B cell (primary cell): ENCODE measurements at regions of chr17 and their contacts with region 1.

Region 1: GRCh38 chr17:49556223-49556971 is 19.3 kb upstream of the NXPH3 start:
- DNase-seq: peak; percentile 85
- ATAC-seq: peak; percentile 94
- H3K4me3 ChIP-seq: no peak overlapping the region
- H3K4me3 Mint-ChIP-seq: no peak overlapping the region
- H3K27ac ChIP-seq: no peak overlapping the region
- H3K27ac Mint-ChIP-seq: no peak overlapping the region
- H3K4me1 ChIP-seq: peaks cover 0 to 6% of the 10 kb centered on the region in 2 donors
- H3K4me1 Mint-ChIP-seq: peaks cover 1% of the 10 kb centered on the region
- H3K27me3 ChIP-seq: peaks cover 0 to 7% (median 0%) of the 10 kb centered on the region in 4 experiments
- H3K27me3 Mint-ChIP-seq: peaks cover 5% of the 10 kb centered on the region
- CTCF ChIP-seq: peak; percentile 98

Region 2: GRCh38 chr17:48791128-48792032 is 765.0 kb before region 1 on chr17:
- CTCF ChIA-PET with region 1: no interaction called
- POLR2A ChIA-PET with region 1: no interaction called
- intact Hi-C with region 1: no loop called
- DNase-seq: peak; percentile 32
- ATAC-seq: no peak
- H3K4me3 ChIP-seq: no peak overlapping the region
- H3K4me3 Mint-ChIP-seq: no peak overlapping the region
- H3K27ac ChIP-seq: no peak overlapping the region
- H3K27ac Mint-ChIP-seq: no peak overlapping the region
- H3K4me1 ChIP-seq: peaks cover 0 to 10% of the 10 kb centered on the region in 2 donors
- H3K4me1 Mint-ChIP-seq: peaks cover 3% of the 10 kb centered on the region
- H3K27me3 ChIP-seq: peaks cover 0 to 20% (median 3%) of the 10 kb centered on the region in 4 experiments
- H3K27me3 Mint-ChIP-seq: peaks cover 47% of the 10 kb centered on the region
- CTCF ChIP-seq: peak; percentile 33

Region 3: DNA sequence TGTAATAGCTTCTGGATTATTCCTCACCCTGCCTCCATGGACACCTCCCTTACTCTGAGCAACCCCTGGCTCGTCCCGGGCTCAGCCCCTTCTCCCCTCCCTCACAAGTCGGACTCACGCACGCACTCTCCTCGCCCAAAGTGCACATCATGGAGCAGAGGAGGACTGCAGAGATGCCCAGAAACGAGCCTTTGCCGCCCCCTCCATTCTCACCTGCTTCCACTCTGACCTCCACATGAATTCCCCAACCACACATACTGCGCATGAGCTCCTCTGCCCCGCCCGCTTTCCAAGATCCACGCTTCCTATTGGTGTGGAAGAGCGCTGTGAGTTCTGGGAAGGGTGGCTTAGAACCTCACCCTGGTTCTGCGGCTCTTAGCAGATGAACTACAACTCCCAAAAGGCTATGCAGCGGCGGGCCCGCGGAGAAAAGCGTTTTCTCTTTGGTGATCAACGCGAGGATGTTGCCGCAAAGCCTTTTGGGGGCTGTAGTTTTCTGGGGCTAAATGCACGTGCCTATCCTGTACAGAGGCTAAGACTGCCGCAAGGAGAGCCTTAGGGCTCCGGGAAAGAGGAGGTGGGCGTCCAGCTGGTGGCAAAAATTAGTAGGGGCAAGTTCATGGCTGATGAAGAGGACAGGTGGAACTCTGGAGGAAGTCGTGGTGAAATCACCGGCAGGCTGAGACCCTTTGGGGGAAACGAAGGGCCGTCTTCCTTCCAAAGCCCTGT is 141.6 kb before region 1 on chr17 and contains the start of gene PHB1:
- CTCF ChIA-PET with region 1: interaction called, 152 read pairs
- POLR2A ChIA-PET with region 1: no interaction called
- intact Hi-C with region 1: no loop called
- DNase-seq: peak; percentile 96
- ATAC-seq: peak; percentile 98
- H3K4me3 ChIP-seq: peak within 1 kb of the TSS; percentile 51 to 93 (median 75)
- H3K4me3 Mint-ChIP-seq: peak within 1 kb of the TSS; percentile 94
- H3K27ac ChIP-seq: peak within 1 kb of the TSS in 1 of 2 donors; percentile 72
- H3K27ac Mint-ChIP-seq: peak within 1 kb of the TSS; percentile 84
- H3K4me1 ChIP-seq: peaks cover 7 to 17% of the 10 kb centered on the region in 2 donors
- H3K4me1 Mint-ChIP-seq: peaks cover 22% of the 10 kb centered on the region
- H3K27me3 ChIP-seq: no peaks in the 10 kb centered on the region
- H3K27me3 Mint-ChIP-seq: no peaks in the 10 kb centered on the region
- CTCF ChIP-seq: no peak
- total RNA-seq, gene PHB1: 72.3 and 73.6 TPM in 2 replicates

Region 4: DNA sequence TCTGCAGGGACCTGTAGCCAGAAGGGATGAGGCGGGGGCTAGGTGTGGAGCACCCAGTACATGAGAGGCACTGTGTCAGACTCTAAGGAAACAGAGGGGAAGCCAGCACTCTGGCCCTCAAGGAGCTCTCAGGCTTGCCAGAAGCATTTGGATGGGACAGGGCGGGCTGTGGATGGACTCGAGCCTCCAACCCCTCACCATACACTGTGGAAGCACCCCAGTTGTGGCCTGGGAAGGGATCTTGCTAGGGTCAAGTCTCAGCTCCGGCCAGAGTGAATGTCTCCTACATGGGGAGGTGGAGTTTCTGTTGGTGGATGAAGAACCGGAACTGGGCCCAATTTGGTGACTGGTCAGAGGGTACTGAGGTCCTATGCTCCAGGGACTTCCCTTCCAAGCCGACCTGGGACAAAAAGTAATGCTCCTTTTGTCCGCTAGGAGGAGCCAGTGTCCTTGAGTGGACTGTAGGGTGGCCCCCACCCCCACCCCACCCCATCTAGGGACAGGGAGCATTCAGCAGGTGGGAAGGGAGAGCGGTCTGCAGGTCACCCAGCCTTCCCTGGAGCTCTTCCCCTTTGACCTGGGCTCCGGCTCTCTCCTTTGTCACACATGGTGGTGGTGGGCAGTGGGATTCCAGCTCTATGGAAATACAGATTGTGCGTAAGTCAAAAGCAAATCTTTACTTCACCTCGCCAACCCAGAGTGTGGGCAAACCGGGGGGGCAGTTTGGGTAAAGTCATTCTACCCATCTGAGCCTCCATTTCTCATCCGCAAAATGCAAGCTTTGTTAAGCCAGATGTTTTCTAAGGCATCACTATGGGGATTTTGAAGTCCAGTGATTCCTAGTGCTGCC is 121.4 kb before region 1 on chr17:
- CTCF ChIA-PET with region 1: interaction called, 57 read pairs
- POLR2A ChIA-PET with region 1: no interaction called
- intact Hi-C with region 1: loop called (anchors 1 kb)
- DNase-seq: peak; percentile 57
- ATAC-seq: peak; percentile 33
- H3K4me3 ChIP-seq: no peak overlapping the region
- H3K4me3 Mint-ChIP-seq: no peak overlapping the region
- H3K27ac ChIP-seq: no peak overlapping the region
- H3K27ac Mint-ChIP-seq: no peak overlapping the region
- H3K4me1 ChIP-seq: peaks cover 10 to 11% of the 10 kb centered on the region in 2 donors
- H3K4me1 Mint-ChIP-seq: peaks cover 10% of the 10 kb centered on the region
- H3K27me3 ChIP-seq: peaks cover 0 to 29% (median 5%) of the 10 kb centered on the region in 4 experiments
- H3K27me3 Mint-ChIP-seq: peaks cover 39% of the 10 kb centered on the region
- CTCF ChIP-seq: peak; percentile 74

Region 5: DNA sequence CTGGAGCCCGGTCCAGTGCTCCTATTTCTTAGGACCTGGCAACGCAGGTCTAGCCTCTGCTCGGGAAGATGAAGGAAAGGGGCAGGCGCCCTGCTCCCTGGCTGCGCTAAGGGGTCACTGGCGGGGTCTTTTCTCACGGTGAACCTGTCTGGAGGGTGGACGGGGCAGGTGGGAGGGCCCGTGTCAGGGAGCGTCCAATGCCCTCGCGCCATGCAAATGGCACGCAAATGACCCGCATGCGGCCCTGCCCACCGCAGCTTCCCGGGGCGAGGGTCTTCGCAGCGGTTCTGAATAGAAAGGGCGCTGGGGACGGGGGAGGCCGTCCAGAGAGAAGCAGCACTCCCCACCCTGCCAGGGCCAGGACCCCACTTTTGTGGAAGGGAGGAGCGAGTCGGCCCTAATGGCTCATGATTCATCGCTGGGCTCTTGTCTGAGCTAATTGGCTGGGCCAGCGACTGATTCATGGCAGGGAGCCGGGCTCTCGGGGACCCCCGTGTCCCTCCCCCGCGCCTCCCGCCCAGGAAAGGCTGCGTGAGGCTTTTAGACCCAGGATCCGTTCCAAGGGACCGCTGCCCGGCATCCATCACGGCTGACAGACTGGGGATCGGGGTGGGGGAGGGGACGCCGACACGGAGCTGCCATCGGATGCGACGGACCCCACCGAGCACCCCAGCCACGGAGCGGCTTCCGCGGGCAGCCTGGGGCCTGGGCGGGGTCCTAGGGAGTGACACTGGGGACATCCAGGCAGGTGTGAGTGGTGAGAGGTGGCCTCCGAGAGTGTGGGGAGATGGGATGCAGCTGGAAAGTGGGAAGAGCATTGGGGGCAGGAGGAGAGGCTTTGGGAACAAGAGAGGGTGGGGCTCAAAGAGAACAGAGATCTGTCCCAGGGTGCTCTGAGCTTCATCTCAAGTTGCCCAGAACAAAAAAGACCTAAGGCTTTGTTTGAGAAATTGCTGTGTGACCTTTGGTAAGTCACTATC is 86.3 kb before region 1 on chr17:
- CTCF ChIA-PET with region 1: no interaction called
- POLR2A ChIA-PET with region 1: no interaction called
- intact Hi-C with region 1: no loop called
- DNase-seq: no peak
- ATAC-seq: no peak
- H3K4me3 ChIP-seq: no peak overlapping the region
- H3K4me3 Mint-ChIP-seq: no peak overlapping the region
- H3K27ac ChIP-seq: no peak overlapping the region
- H3K27ac Mint-ChIP-seq: no peak overlapping the region
- H3K4me1 ChIP-seq: peaks cover 9 to 10% of the 10 kb centered on the region in 2 donors
- H3K4me1 Mint-ChIP-seq: peaks cover 4% of the 10 kb centered on the region
- H3K27me3 ChIP-seq: peaks cover 0 to 74% (median 25%) of the 10 kb centered on the region in 4 experiments
- H3K27me3 Mint-ChIP-seq: peaks cover 73% of the 10 kb centered on the region
- CTCF ChIP-seq: no peak

Region 6: GRCh38 chr17:49525831-49526741 is 30.3 kb before region 1 on chr17:
- CTCF ChIA-PET with region 1: no interaction called
- POLR2A ChIA-PET with region 1: no interaction called
- intact Hi-C with region 1: no loop called
- DNase-seq: no peak
- ATAC-seq: no peak
- H3K4me3 ChIP-seq: no peak overlapping the region
- H3K4me3 Mint-ChIP-seq: no peak overlapping the region
- H3K27ac ChIP-seq: no peak overlapping the region
- H3K27ac Mint-ChIP-seq: no peak overlapping the region
- H3K4me1 ChIP-seq: no peaks in the 10 kb centered on the region
- H3K4me1 Mint-ChIP-seq: no peaks in the 10 kb centered on the region
- H3K27me3 ChIP-seq: no peaks in the 10 kb centered on the region
- H3K27me3 Mint-ChIP-seq: peaks cover 45% of the 10 kb centered on the region
- CTCF ChIP-seq: no peak

Region 7: DNA sequence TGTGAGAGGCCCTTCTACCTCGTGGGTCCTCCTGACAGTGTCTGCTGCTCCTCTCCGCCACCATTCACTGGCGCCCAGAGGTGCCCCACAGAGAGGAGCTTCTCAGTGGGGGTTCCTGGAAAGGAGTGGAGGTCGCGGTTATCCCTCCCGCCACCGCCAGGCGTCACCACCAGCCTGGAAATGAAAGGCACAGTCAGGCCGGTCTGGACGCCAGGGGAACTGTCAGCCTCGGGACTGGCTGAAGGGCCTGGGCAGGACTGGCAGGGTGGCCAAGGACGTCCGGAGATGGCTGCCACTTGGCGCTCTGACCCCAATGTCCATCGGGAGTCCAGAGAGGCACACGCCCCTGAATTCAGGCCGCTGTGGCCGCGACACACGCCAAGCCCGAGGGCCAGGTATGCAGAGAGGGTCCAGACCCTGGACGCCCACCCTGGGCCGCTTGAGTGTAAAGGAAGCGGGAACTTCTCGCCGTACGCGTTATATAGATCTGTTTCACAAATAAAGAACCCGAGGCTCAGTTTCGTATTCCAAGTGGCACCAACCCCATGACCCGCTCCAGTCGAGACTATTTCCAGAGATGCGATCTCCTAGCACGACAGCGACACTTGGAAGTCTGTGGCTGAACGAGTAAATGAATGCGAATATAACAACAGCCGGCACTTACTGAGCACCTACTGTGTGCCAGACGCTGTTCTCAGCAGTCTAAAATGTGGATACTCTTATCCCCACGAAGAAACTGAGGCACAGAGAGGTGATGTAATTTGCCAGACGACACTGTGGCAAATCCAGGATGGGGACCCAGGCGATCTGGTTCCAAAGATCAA is 11.7 kb after region 1 on chr17:
- CTCF ChIA-PET with region 1: interaction called, 30 read pairs
- POLR2A ChIA-PET with region 1: no interaction called
- intact Hi-C with region 1: no loop called
- DNase-seq: peak; percentile 88
- ATAC-seq: peak; percentile 66
- H3K4me3 ChIP-seq: peak overlapping the region in 3 of 5 experiments; percentile 20 to 39 (median 23)
- H3K4me3 Mint-ChIP-seq: peak overlapping the region; percentile 79
- H3K27ac ChIP-seq: no peak overlapping the region
- H3K27ac Mint-ChIP-seq: peak overlapping the region; percentile 32
- H3K4me1 ChIP-seq: peaks cover 6 to 17% of the 10 kb centered on the region in 2 donors
- H3K4me1 Mint-ChIP-seq: peaks cover 19% of the 10 kb centered on the region
- H3K27me3 ChIP-seq: peaks cover 0 to 42% (median 9%) of the 10 kb centered on the region in 4 experiments
- H3K27me3 Mint-ChIP-seq: peaks cover 36% of the 10 kb centered on the region
- CTCF ChIP-seq: peak; percentile 93

Region 8: DNA sequence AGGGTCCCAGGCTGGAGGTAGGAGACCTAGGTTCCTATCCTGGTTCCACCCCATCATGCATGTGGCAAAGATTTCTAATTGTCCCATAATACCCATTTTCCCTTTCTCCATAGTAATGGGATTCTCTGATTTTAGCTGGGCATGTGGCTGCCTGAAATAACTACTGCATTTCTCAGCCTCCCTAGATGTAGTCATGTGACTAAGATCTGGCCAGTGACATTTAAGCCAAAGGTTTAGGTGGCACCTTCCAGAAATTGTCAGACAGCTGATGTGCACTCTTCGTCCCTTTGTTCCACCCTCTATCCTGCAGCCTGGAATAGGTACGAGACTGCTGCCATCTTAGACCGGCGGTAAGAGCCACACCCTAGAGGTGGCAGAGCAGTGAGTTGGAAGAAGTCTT is 27.5 kb after region 1 on chr17:
- CTCF ChIA-PET with region 1: no interaction called
- POLR2A ChIA-PET with region 1: no interaction called
- intact Hi-C with region 1: no loop called
- DNase-seq: no peak
- ATAC-seq: no peak
- H3K4me3 ChIP-seq: no peak overlapping the region
- H3K4me3 Mint-ChIP-seq: no peak overlapping the region
- H3K27ac ChIP-seq: no peak overlapping the region
- H3K27ac Mint-ChIP-seq: no peak overlapping the region
- H3K4me1 ChIP-seq: no peaks in the 10 kb centered on the region
- H3K4me1 Mint-ChIP-seq: no peaks in the 10 kb centered on the region
- H3K27me3 ChIP-seq: no peaks in the 10 kb centered on the region
- H3K27me3 Mint-ChIP-seq: no peaks in the 10 kb centered on the region
- CTCF ChIP-seq: no peak

Region 9: DNA sequence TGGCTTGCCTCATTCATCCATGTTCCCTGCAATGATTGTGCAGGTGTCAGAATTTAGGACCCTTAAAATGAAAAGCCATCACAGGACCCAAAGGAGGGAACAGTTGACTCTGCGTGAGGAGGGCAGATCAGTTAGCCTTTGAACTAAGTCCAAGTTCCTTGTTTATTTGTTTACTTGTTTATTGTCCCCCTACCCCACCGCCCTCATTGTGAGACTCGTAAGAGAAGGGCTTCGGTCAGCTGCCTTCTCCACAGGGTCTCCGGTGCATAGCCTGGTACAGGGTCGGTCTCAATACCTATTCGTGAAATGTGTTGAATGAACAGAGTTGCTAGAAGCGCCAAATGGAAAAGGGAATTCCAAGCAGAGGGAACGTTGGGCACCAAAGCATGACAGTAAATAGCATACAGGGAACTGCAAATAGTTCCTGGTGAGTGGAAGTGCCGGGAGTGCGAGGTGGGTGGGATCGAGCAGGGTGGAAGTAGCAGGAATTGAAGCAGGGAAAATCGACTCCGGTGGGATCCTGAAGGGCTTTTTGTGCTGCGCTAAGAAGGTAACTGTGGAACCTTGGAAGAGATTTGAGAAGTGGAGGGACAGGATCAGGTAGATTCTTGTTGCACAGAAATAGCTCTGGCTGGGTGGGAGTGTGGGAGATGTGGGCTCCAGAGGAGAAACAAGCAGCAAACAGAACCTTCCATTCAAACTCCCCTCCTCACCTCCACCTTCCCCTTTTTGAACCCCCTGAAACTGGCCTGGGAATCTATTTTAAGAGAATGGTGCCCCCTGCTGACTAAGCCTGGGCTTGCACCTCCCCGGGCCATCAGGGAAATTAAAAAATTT is 138.7 kb after region 1 on chr17:
- CTCF ChIA-PET with region 1: interaction called, 485 read pairs
- POLR2A ChIA-PET with region 1: no interaction called
- intact Hi-C with region 1: no loop called
- DNase-seq: peak; percentile 83
- ATAC-seq: peak; percentile 80
- H3K4me3 ChIP-seq: no peak overlapping the region
- H3K4me3 Mint-ChIP-seq: no peak overlapping the region
- H3K27ac ChIP-seq: no peak overlapping the region
- H3K27ac Mint-ChIP-seq: no peak overlapping the region
- H3K4me1 ChIP-seq: peaks cover 16 to 19% of the 10 kb centered on the region in 2 donors
- H3K4me1 Mint-ChIP-seq: peaks cover 17% of the 10 kb centered on the region
- H3K27me3 ChIP-seq: no peaks in the 10 kb centered on the region
- H3K27me3 Mint-ChIP-seq: peaks cover 3% of the 10 kb centered on the region
- CTCF ChIP-seq: peak; percentile 97